Activated CD4-positive, alpha-beta memory T cell treated with anti-CD3 and anti-CD28 coated beads, Interleukin-2, amount 10 ng/mL, durations not matched to agents 7 days and 5 days (primary cell): ENCODE measurements at regions of chr1 and their contacts with region 1.

Region 1: DNA sequence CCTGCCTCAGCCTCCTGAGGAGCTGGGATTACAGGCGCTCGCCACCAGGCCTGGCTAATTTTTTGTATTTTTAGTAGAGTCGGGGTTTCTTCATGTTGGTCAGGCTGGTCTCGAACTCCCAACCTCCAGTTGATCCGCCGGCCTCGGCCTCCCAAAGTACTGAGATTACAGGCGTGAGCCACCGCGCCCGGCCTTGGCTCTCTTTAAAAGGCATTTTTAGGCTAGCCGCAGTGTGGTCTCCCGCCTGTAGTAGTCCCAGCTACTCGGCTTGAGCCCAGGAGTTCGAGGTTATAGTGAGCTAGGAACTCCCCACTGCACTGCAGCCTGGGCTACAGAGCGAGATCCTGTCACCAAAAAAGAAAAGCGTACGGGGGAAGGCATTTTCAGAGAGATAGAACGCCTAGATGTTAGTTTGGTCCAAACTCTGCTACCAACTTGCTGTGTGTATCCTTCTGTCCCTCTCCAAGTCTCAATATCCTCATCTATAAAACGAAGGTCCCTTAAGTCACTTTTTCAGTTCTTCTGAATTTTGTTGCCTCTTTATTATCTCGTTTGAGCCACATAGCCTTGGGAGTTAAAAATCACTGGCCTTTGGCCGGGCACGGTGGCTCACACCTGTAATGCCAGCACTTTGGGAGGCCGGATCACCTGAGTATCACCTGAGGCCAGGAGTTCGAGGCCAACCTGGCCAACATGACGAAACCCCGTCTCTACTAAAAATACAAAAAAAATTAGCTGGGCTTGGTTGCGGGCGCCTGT is 734 bp downstream of the MED18 start:
- DNase-seq: peak; percentile 61
- H3K4me3 Mint-ChIP-seq: peak overlapping the region; percentile 95
- H3K27ac Mint-ChIP-seq: peak overlapping the region; percentile 97
- H3K4me1 Mint-ChIP-seq: peaks cover 44% of the 10 kb centered on the region
- H3K27me3 Mint-ChIP-seq: no peaks in the 10 kb centered on the region

Region 2: DNA sequence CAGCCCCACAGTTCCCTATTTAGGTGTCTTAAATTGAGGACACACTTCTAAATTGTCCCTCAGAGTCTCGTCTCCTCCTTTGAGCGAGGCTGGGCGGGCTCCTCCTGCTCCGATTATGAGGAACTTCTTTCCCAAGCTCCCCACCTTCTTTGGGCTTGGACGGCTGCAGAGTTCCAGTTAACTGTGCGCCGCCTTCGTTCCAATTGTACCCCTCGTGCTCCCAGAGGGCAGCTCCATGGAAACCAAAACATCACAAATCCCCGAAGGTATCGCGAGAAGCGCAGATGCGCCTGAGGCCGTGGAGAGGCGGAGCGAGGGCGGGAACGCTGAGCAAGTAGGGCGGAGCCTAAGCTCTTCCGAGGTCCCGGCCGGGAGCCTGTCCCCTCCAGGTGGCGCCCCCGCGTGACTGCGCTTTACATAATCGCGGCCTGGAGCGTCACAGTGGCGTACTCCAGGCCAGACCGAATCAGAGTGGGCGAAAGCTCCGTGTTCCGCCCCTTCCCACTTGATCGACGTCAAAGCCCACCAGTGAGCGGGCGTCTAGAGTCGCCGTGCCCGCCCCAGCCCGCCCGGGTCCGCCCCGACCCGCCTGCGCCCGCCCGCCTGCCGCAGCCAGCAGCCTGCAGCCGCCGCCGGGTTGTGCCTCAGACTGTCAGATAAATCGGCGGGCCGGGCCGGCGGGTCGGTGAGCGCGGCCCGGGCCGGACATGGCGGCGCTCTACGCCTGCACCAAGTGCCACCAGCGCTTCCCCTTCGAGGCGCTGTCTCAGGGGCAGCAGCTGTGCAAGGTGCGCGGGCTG is 604.0 kb before region 1 on chr1 and contains the start of gene FAM76A:
- CTCF ChIA-PET with region 1: no interaction called
- POLR2A ChIA-PET with region 1: no interaction called
- DNase-seq: peak; percentile 100
- H3K4me3 Mint-ChIP-seq: peak within 1 kb of the TSS; percentile 79
- H3K27ac Mint-ChIP-seq: peak within 1 kb of the TSS; percentile 73
- H3K4me1 Mint-ChIP-seq: peaks cover 24% of the 10 kb centered on the region
- H3K27me3 Mint-ChIP-seq: peaks cover 3% of the 10 kb centered on the region
- total RNA-seq, gene FAM76A: 13.6 to 14.1 TPM

Region 3: DNA sequence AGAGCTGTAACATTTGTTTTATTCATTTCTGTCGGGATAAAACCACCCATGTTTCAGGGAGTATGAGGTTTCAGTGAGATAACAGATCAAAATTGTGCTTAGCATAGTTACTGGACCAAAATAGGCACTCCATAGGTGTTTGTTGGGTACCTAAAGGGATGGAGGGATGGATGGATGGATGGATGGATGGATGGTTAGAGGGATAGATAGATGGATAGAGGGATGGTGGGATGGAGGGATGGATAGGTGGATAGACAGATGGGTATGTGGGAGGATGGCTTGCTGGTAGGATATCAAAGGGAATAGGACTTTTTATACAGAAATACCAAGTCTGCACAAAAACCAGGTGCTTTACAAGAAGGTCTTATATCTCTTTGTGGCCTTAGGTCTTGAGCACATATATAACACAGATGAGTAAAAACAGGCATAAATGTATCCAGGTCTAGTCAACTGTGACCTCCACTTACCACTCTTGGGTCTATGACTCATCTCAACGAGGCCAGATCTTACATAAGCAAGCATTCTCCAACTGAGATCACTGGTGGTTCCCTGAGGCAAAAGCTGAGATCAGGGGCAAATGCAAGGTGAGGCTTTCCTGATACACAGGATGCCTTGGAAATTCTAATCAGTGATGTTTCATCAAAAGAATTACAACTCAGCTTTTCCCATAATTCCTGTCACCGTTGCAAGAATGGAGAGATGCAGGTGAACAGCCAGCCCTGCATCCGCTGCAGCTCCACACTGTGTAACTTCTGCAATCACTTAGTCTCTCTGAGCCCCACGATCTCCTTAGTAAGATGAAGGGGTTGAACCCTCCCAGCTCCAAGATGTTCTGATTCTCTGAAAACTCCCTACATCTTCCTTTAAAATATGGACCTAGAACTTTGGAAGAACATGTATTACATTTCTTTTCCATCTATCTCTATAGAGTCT is 185.1 kb before region 1 on chr1:
- CTCF ChIA-PET with region 1: no interaction called
- POLR2A ChIA-PET with region 1: no interaction called
- DNase-seq: peak; percentile 36
- H3K4me3 Mint-ChIP-seq: no peak overlapping the region
- H3K27ac Mint-ChIP-seq: no peak overlapping the region
- H3K4me1 Mint-ChIP-seq: peaks cover 15% of the 10 kb centered on the region
- H3K27me3 Mint-ChIP-seq: peaks cover 49% of the 10 kb centered on the region

Region 4: GRCh38 chr1:28235755-28236655 is 93.6 kb before region 1 on chr1 and contains the start of gene ATP5IF1:
- CTCF ChIA-PET with region 1: no interaction called
- POLR2A ChIA-PET with region 1: interaction called, 19 read pairs
- DNase-seq: peak; percentile 96
- H3K4me3 Mint-ChIP-seq: no peak within 1 kb of the TSS
- H3K27ac Mint-ChIP-seq: no peak within 1 kb of the TSS
- H3K4me1 Mint-ChIP-seq: peaks cover 25% of the 10 kb centered on the region
- H3K27me3 Mint-ChIP-seq: no peaks in the 10 kb centered on the region
- total RNA-seq, gene ATP5IF1: 178 TPM

Region 5: DNA sequence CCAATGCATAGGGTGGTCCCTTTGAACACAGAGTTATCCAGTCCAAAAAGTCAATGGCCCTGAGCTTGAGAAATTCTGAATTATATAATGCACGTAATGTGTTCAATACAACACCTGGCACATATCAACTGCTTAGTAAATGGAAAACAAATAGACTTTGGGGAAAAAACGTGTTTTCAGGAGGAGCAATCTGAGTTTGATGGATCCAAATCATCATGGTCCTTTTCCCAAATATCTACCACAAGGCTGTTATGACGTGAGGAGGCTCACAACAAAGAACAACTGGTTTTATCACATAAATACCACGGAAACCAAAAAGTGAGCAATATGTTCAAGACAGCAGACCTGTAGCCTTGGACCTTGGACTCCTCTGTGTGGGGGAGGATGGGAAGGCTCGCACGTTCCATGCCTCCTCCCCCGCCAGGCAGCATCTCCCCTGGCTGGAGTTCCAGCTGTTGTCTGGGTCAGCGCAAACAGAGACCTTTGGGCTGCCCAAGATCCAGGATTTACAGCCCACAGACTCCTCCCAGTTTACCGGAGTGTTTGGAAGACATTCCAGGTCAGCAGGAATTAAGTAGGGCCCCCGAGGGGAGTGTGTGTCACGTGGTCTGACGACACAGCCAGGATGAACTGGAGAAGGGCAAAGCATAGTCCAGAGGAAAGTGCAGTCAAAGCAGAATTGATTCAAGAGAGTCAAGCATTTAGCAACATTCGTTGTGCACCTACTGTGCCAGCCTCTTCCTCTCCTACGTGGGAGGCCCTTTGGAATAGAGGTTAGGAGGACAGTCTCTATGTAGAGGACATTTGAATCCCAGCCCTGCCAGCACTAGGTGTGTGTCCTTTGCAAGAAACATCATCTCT is 32.9 kb before region 1 on chr1:
- CTCF ChIA-PET with region 1: no interaction called
- POLR2A ChIA-PET with region 1: interaction called, 13 read pairs
- DNase-seq: no peak
- H3K4me3 Mint-ChIP-seq: no peak overlapping the region
- H3K27ac Mint-ChIP-seq: no peak overlapping the region
- H3K4me1 Mint-ChIP-seq: peaks cover 19% of the 10 kb centered on the region
- H3K27me3 Mint-ChIP-seq: peaks cover 10% of the 10 kb centered on the region

Region 6: DNA sequence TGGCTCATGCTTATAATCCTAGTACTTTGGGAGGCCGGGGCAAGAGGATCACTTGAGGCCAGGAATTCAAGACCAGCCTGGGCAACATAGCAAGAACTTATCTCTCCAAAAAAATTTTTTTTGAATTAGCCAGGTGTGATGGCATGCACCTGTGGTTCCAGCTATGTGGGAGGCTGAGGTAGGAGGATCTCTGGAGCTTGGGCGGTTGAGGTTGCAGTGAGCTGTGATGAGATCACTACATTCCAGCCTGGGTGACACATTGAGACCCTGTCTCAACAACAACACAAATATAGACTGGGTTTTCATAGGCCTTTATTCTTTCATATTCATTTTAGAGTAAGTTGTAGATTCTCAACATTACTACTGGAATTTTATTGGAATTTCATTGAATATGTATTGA is 12.0 kb after region 1 on chr1:
- CTCF ChIA-PET with region 1: interaction called, 3 read pairs
- POLR2A ChIA-PET with region 1: interaction called, 16 read pairs
- DNase-seq: no peak
- H3K4me3 Mint-ChIP-seq: no peak overlapping the region
- H3K27ac Mint-ChIP-seq: no peak overlapping the region
- H3K4me1 Mint-ChIP-seq: peaks cover 8% of the 10 kb centered on the region
- H3K27me3 Mint-ChIP-seq: no peaks in the 10 kb centered on the region

Region 7: GRCh38 chr1:28642847-28643635 is 313.5 kb after region 1 on chr1 and contains the start of gene TAF12:
- CTCF ChIA-PET with region 1: no interaction called
- POLR2A ChIA-PET with region 1: interaction called, 15 read pairs
- DNase-seq: peak; percentile 95
- H3K4me3 Mint-ChIP-seq: peak within 1 kb of the TSS; percentile 96
- H3K27ac Mint-ChIP-seq: peak within 1 kb of the TSS; percentile 96
- H3K4me1 Mint-ChIP-seq: peaks cover 54% of the 10 kb centered on the region
- H3K27me3 Mint-ChIP-seq: no peaks in the 10 kb centered on the region
- total RNA-seq, gene TAF12: 33.8 to 34.0 TPM

Region 8: DNA sequence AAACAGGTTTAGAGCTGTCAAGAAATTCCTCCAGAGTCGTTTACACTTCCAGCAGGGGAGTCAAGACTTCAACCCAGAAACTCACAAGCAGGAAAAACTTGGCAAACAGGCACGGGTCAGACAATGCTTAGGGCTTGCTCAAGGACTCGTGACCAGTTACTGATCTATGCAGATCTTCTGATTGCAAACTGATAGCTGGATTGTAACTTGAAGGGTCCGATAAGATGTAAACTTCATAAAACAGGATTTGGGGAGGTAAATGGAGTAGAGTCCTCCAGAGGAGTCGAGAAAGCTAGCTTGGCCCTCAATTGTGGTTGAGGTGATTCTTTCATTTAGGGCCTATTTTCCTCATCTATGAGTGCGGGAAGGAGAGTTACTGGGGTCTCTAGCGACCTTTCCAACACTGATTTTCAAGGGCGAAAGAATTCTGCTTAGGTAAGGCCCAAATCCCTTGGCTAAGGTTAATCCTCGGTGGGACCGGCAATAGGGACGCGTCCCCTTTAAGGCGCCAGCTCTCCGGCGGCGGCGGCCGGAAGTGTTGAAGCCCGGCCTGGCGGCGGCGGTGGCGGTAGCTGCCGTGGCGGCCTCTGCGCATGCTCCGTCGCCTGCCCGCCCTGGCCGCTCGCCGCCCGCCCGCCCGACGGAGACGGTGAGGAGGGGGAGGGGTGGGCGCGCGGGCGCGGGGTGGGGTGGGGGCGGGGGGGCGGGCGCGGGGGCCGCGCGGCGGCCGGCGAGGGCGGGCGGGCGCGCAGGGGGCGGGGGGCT is 338.8 kb after region 1 on chr1 and contains the start of gene GMEB1:
- CTCF ChIA-PET with region 1: interaction called, 3 read pairs
- POLR2A ChIA-PET with region 1: interaction called, 12 read pairs
- DNase-seq: peak; percentile 89
- H3K4me3 Mint-ChIP-seq: peak within 1 kb of the TSS; percentile 92
- H3K27ac Mint-ChIP-seq: peak within 1 kb of the TSS; percentile 97
- H3K4me1 Mint-ChIP-seq: peaks cover 20% of the 10 kb centered on the region
- H3K27me3 Mint-ChIP-seq: no peaks in the 10 kb centered on the region
- total RNA-seq, gene GMEB1: 27.7 to 28.7 TPM